GM13977 (cell line): ENCODE measurements at regions of chr1 and their contacts with region 1.

Region 1: DNA sequence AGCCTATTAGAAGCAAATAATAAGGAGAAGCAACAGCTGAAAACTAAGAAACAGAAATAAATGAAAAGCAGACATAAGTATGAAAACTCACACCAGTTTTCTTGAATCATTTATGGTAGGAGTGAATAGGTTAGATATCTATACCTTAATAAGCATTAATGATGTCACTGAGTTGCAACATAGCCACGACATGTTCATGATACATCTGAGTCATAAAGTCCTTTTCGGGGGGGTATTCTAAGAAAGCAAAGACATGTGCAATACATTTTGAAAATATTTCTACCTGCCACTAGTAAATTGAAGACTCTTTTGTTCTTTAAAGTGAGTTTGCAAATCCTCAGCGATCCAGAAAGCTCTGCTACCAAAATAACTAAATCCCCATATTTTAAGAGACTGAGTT is 7.2 kb downstream of the CD34 start:
- DNase-seq: no peak
- CTCF ChIP-seq: no peak

Region 2: DNA sequence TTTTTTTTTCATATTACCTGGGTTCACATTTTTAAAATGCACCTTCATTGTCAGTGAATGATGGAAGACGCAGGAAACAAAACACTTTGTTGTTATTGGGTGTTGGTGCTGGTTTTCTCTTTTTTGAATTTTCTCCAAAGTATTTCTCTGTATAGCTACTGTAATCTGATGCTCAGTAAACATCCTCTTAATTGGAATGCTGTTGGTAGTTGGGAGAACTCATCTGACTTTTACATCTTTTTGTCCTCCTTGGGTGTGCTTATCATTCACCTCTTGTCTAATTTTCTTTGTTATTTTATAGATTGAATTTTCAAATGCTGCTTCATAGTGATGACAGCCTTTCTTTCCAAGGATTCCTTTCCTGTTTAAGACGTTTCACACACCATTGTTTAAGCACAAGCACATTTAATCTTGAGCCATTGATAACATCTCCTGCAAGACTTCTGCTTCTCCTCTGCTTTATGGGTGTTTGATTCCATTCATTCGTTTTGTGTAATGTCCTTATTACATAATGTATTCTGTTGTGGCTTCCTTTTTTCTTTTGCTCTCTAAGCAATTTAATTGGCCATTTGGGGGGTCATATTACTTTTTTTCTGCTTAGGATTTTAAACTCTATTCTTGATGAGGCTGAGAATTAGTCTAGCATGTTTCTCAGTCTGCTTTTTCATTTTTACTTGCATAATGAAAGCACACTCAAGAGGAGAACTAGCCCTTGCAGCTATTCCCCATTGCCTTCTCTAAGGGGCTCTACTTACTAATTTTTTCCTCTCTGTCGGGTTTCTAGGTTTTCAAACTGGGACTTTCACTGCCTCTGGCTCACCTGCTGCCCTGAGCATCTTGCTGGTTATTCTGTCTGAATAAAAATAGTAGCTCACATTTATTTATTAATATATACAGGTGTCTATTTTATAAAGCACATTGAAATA is 49.1 kb after region 1 on chr1:
- in situ Hi-C with region 1: loop called (anchors 5 kb)
- DNase-seq: peak; percentile 36
- CTCF ChIP-seq: no peak